ENCODE measurements at regions of chr14 and their contacts with region 1.

Region 1: DNA sequence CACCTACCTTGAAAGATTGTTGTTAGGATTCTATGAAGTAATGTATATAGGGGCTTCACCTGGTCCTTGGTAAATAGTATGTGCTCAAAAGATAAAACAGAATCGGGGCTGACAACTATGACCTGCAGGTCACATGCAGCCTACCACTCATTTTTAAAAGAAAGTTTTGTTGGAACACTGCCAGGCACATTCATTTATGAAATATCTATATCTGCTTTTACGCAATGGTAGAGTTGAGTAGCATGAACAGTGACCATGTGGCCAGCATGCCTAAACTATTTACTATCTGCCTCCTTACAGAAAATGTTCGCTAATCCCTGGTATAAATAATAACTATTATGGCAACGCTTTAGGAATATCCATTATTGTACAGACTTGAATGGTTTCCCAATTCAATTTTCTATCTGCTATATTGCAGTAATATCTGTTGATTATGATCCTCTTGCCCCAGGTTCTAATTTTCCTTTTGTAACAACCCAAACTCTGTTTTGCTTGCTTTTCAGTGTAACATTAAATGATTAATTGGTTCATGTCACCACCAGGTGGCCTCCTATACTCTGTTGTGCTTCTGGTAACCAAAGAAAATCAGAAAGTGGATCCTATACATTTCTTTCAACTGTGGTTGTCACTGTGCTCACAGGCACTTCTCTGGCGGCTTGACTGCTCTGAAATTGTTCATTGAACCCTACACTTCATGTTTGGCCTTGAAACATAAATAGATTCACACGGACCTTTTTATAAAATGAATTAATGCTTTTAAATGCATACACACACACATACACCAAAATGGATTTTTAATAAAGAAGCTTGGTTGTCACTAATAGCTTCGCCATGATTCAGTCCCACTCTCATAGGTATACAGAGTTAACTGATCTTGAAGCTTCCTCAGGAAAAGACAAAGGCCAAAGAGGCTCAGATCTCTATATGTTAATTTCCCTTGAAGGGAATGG is 227.7 kb upstream of the NPAS3 start:
- DNase-seq: peak; percentile 2
- ATAC-seq: no peak
- H3K4me3 ChIP-seq: no peak overlapping the region
- H3K27ac ChIP-seq: no peak overlapping the region
- H3K4me1 ChIP-seq: no peaks in the 10 kb centered on the region
- H3K27me3 ChIP-seq: no peaks in the 10 kb centered on the region
- CTCF ChIP-seq: peak; percentile 49

Region 2: DNA sequence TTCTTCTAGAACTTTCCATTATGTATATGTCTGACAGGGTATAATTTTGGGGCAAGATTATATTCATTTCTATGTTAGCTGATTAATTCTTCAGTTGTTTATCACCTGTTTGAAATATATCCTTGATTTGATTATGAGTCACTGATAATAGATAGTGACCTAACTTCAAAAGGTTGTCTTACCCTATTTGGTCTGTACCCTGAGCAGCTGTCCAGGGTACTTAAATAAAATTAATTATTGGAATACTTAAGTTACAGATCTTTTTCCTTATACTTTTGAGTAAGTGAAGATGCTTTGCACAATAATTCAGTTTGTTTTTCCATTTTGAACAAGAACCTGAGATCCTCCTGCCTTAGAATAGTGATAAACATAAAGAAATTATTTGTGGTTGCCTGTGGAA is 214.4 kb after region 1 on chr14:
- CTCF ChIA-PET with region 1: no interaction called
- POLR2A ChIA-PET with region 1: no interaction called
- in situ Hi-C with region 1: no loop called
- intact Hi-C with region 1: no loop called
- DNase-seq: no peak
- ATAC-seq: no peak
- H3K4me3 ChIP-seq: no peak overlapping the region
- H3K27ac ChIP-seq: no peak overlapping the region
- H3K4me1 ChIP-seq: no peaks in the 10 kb centered on the region
- H3K27me3 ChIP-seq: no peaks in the 10 kb centered on the region; the same call in 1 of the 2 replicates
- CTCF ChIP-seq: no peak

Region 3: GRCh38 chr14:33792720-33793368 is 1081.8 kb after region 1 on chr14:
- CTCF ChIA-PET with region 1: no interaction called
- POLR2A ChIA-PET with region 1: no interaction called
- in situ Hi-C with region 1: no loop called
- intact Hi-C with region 1: loop called (anchors 5 kb)
- DNase-seq: peak; percentile 25
- ATAC-seq: peak; percentile 75
- H3K4me3 ChIP-seq: no peak overlapping the region
- H3K27ac ChIP-seq: no peak overlapping the region
- H3K4me1 ChIP-seq: no peaks in the 10 kb centered on the region
- H3K27me3 ChIP-seq: no peaks in the 10 kb centered on the region; the same call in 1 of the 2 replicates
- CTCF ChIP-seq: peak; percentile 87